Right lobe of liver (tissue), 6 donors: ENCODE measurements at regions of chr20 and their contacts with region 1.

Region 1: DNA sequence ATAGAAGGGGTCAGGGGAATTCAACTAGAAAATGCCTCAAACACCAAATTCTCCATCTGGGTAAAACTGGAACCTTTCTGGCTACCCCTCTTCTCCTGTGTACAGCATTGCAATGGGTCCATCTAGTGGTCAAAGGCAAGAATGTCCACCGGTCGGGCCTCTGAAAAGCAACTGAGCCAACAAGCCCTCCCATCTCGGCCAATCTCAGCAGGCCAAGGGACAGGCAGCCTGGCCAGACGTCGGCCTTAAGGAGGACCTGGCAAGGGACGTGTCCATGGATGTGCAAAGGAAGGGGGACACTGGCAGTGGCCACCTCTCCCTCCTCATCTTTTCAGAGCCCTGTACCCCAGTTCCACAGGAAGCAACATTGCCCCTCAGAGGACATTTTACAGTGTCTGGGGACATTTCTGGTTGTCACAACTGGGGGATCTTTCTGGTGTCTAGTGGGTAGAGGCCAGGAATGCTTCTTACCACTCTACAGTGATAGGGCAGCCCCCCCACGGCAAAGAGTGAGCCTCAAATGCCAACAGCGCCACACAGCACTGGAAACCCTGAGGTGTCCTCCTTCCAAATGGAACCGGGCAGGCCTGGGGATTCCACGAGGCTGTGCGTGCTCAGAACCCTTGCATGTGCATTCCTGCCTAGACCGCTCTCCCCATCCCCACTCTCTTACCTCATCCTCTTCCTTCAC is 99.8 kb upstream of the FOXA2 start:
- DNase-seq: peak in 2 of 3 donors; percentile 44 to 69
- ATAC-seq: peak; percentile 91 to 96 (median 94)
- H3K4me3 ChIP-seq: no peak overlapping the region
- H3K27ac ChIP-seq: no peak overlapping the region
- H3K4me1 ChIP-seq: no peaks in the 10 kb centered on the region
- H3K27me3 ChIP-seq: no peaks in the 10 kb centered on the region
- CTCF ChIP-seq: peak; percentile 80 to 94 (median 87)
- POLR2A ChIP-seq: no peak

Region 2: DNA sequence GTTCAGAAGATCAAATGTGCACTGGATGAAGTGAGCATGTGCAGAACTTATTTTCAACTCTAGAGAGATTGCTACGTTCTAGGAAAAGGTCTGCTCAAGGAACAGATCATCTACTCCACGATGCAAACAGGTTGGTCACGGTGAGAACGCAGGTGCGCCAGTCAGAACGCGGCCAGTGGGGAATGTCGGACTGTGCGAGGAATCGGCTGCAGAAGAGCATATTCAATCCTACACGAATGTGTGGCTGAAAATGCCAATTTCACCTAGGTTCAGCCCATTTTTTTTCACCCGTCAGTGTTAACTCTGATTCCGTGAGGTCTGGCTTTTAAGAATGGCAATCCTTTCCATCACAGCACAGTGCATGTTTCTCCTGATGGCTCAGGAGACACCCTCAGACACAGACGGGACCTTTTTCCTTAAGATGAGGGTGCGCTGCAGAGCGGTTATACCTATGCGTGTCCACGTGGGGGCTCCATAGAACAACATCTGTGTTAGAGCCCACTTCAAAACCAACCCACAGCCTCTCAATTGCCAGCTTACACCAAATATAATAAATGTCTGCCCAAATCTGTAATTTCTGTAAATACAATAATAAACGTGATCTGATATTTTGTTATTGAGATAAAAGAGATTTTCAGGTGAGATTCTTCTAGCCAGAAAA is 350.2 kb before region 1 on chr20:
- intact Hi-C with region 1: loop called (anchors 5 kb)
- DNase-seq: peak in 2 of 3 donors; percentile 53 to 64
- ATAC-seq: peak; percentile 95 to 97 (median 96)
- H3K4me3 ChIP-seq: no peak overlapping the region
- H3K27ac ChIP-seq: no peak overlapping the region
- H3K4me1 ChIP-seq: no peaks in the 10 kb centered on the region
- H3K27me3 ChIP-seq: no peaks in the 10 kb centered on the region
- CTCF ChIP-seq: peak; percentile 63 to 79 (median 72)
- POLR2A ChIP-seq: no peak

Region 3: GRCh38 chr20:22339091-22339881 is 344.9 kb before region 1 on chr20:
- intact Hi-C with region 1: loop called (anchors 5 kb)
- DNase-seq: peak in 1 of 3 donors; percentile 51
- ATAC-seq: peak; percentile 63 to 83 (median 79)
- H3K4me3 ChIP-seq: no peak overlapping the region
- H3K27ac ChIP-seq: no peak overlapping the region
- H3K4me1 ChIP-seq: no peaks in the 10 kb centered on the region
- H3K27me3 ChIP-seq: no peaks in the 10 kb centered on the region
- CTCF ChIP-seq: peak; percentile 70 to 91 (median 73)
- POLR2A ChIP-seq: no peak

Region 4: DNA sequence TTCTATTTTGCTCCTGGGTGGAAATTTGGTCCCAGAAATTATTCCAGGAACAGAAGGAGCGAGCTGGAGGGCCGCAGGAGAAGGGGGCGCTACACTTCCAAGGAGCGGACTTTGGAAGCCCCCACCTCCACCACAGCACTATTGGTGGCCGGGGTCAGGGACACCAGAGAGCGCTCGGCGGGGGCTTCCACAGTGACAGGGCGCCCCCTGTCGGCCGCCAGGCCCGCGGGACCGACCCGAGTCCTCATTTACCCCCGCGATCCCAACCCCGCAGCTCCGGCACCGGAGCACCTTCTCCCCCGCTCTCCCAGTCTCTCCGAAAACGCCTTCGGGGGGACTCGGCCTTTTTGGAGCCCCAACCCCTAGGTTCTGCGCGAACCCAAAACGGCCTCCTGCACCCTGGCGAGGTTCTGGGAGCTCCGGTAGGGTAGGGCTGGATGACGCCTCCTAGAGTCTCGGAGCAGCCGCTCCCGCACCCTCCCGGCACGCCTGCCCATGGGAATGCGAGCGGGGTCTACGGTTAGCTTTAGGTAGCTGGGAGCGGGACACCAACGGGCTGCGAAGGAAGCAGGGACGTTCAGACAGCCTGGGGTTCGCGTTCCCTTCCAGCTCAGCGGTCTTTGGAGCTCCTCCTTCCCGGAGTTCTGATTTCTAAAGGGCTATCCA is 97.4 kb before region 1 on chr20:
- intact Hi-C with region 1: loop called in 1 of 2 experiments (anchors 10 kb)
- DNase-seq: peak; percentile 78 to 83 (median 81)
- ATAC-seq: peak; percentile 31 to 60 (median 54)
- H3K4me3 ChIP-seq: peak overlapping the region; percentile 41 to 58 (median 57)
- H3K27ac ChIP-seq: peak overlapping the region in 2 of 3 donors; percentile 3 to 49
- H3K4me1 ChIP-seq: peaks cover 0 to 11% (median 5%) of the 10 kb centered on the region in 4 donors
- H3K27me3 ChIP-seq: no peaks in the 10 kb centered on the region
- CTCF ChIP-seq: peak; percentile 75 to 92 (median 86)
- POLR2A ChIP-seq: no peak